CD4-positive, alpha-beta memory T cell (primary cell): ENCODE measurements at regions of chr14 and their contacts with region 1.

Region 1: DNA sequence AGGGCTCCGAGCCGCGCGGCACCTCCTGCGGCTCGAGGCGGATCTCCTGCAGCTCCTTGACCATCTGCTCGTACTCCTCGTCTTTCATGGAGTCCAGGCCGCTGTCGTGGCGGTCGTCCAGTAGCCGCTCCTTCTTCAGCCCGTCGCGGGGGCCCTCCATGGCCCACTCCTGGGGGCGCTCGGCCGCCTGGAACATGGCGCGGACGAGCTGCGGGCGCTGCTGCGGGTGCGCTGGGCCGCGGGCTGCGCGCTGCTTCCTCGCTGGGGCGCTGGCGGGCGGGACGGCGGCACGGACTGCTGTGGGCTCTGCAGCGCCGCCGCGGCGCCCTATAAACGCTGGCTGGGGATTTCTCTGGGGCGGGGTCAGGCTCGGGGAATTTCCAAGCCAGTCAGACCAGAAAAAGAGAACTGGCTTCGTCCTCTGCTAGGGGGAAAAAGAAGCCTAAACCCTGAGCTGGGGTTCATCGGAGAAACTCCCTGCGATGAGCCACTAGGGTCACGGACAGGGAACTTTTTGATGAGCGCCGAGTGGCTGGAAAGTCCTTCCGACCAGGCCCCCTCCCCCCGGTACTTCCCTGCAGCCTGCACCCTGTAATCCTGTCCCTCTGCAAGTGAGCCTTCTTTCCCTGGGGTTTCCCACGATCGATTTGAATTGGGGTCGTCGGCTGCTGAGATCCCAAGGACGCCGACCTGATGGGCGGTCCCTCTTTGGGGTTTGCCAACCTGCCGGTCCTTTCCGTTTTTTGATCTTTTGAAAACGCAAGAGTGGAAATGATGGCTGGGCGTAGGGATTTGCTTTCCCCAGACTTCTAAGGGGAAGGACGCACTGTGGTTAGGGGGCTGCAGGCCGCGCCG is at the start of gene NFKBIA:
- DNase-seq: peak; percentile 94 to 96 (median 95)
- H3K4me3 ChIP-seq: peak within 1 kb of the TSS; percentile 88 to 98
- H3K4me3 Mint-ChIP-seq: peak within 1 kb of the TSS; percentile 93 to 97 (median 95)
- H3K27ac ChIP-seq: peak within 1 kb of the TSS; percentile 100
- H3K27ac Mint-ChIP-seq: peak within 1 kb of the TSS; percentile 99 to 100 (median 99)
- H3K4me1 ChIP-seq: peaks cover 60% of the 10 kb centered on the region
- H3K4me1 Mint-ChIP-seq: peaks cover 34 to 71% (median 49%) of the 10 kb centered on the region in 4 donors
- H3K27me3 ChIP-seq: no peaks in the 10 kb centered on the region
- H3K27me3 Mint-ChIP-seq: peaks cover 0 to 2% of the 10 kb centered on the region in 2 donors
- total RNA-seq, gene NFKBIA: 119 to 120 TPM

Region 2: DNA sequence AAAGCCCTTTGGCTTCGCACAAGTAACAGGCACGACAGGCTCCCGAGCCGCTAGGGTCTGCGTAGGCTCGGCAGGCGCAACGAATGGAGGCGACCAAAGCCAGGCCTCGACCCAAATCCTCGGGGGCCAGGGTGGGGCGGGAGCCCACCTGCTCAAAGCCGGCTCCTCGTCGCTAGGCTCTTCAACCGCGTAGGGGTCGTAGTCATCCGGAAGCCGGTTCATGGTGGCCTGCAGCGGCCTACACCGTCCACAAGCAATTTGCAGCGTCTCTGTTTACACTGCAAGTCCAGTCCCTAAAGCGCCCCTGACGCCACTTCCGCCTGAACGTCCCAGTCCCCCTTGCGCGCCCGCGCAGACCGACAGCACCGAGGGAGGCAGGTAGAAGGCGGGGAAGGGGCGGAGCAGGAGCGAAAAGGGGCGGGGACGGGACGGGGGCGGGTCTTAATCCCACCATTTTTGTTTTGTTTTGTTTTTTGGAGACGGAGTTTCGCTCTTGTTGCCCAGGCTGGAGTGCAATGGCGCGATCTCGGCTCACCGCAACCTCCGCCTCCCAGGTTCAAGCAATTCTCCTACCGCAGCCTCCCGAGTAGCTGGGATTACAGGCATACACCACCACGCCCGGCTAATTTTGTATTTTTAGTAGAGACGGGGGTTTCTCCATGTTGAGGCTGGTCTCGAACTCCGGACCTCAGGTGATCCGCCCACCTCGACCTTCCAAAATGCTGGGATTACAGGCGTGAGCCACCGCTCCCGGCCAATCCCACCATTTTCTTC is 865.1 kb before region 1 on chr14 and contains the start of gene EAPP:
- CTCF ChIA-PET with region 1: no interaction called
- POLR2A ChIA-PET with region 1: interaction called, 6 read pairs
- intact Hi-C with region 1: loop called (anchors 5 kb)
- DNase-seq: peak; percentile 91 to 97 (median 93)
- H3K4me3 ChIP-seq: peak within 1 kb of the TSS; percentile 66 to 94
- H3K4me3 Mint-ChIP-seq: peak within 1 kb of the TSS; percentile 97 to 100 (median 99)
- H3K27ac ChIP-seq: peak within 1 kb of the TSS; percentile 100
- H3K27ac Mint-ChIP-seq: peak within 1 kb of the TSS; percentile 97 to 100 (median 99)
- H3K4me1 ChIP-seq: peaks cover 31% of the 10 kb centered on the region
- H3K4me1 Mint-ChIP-seq: peaks cover 19 to 45% (median 31%) of the 10 kb centered on the region in 4 donors
- H3K27me3 ChIP-seq: no peaks in the 10 kb centered on the region
- H3K27me3 Mint-ChIP-seq: no peaks in the 10 kb centered on the region
- total RNA-seq, gene EAPP: 58.2 to 66.4 TPM

Region 3: GRCh38 chr14:35046048-35046741 is 358.5 kb before region 1 on chr14 and contains the start of gene FAM177A1:
- CTCF ChIA-PET with region 1: interaction called, 7 read pairs
- POLR2A ChIA-PET with region 1: interaction called, 58 read pairs
- intact Hi-C with region 1: loop called (anchors 1 kb)
- DNase-seq: peak; percentile 98 to 100 (median 99)
- H3K4me3 ChIP-seq: peak within 1 kb of the TSS; percentile 76 to 92
- H3K4me3 Mint-ChIP-seq: peak within 1 kb of the TSS; percentile 87 to 100 (median 96)
- H3K27ac ChIP-seq: peak within 1 kb of the TSS; percentile 98
- H3K27ac Mint-ChIP-seq: peak within 1 kb of the TSS; percentile 95 to 100 (median 99)
- H3K4me1 ChIP-seq: peaks cover 24% of the 10 kb centered on the region
- H3K4me1 Mint-ChIP-seq: peaks cover 19 to 38% (median 30%) of the 10 kb centered on the region in 4 donors
- H3K27me3 ChIP-seq: no peaks in the 10 kb centered on the region
- H3K27me3 Mint-ChIP-seq: no peaks in the 10 kb centered on the region
- total RNA-seq, gene FAM177A1: 35.2 to 41.5 TPM

Region 4: GRCh38 chr14:35201066-35201465 is 203.6 kb before region 1 on chr14:
- CTCF ChIA-PET with region 1: interaction called, 4 read pairs
- POLR2A ChIA-PET with region 1: interaction called, 28 read pairs
- intact Hi-C with region 1: no loop called
- DNase-seq: peak in 4 of 5 donors; percentile 22 to 40 (median 28)
- H3K4me3 ChIP-seq: no peak overlapping the region
- H3K4me3 Mint-ChIP-seq: peak overlapping the region in 6 of 8 donors; percentile 29 to 78 (median 61)
- H3K27ac ChIP-seq: peak overlapping the region; percentile 15
- H3K27ac Mint-ChIP-seq: peak overlapping the region; percentile 44 to 89 (median 70)
- H3K4me1 ChIP-seq: peaks cover 63% of the 10 kb centered on the region
- H3K4me1 Mint-ChIP-seq: peaks cover 28 to 57% (median 45%) of the 10 kb centered on the region in 4 donors
- H3K27me3 ChIP-seq: no peaks in the 10 kb centered on the region
- H3K27me3 Mint-ChIP-seq: no peaks in the 10 kb centered on the region

Region 5: DNA sequence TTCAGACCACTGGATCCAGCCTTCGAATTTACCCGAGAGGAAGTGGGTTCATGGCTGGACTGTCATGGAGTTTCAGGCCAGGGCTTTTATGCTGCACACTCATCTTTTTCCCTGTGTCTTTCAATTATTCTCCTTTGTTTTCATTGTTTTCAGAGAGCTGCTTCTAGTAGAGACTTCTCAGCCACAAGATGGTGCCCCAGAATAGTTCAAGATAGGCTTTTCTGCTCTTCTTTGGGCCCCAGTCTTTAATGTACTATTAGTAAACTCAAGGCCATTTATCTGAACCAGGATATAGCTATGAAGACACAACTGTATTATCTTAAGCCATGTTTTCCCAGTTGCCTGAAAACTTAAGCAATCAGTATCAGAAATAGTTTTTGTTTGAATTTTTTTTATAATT is 142.9 kb before region 1 on chr14:
- CTCF ChIA-PET with region 1: interaction called, 28 read pairs
- POLR2A ChIA-PET with region 1: interaction called, 5 read pairs
- intact Hi-C with region 1: no loop called
- DNase-seq: no peak
- H3K4me3 ChIP-seq: no peak overlapping the region
- H3K4me3 Mint-ChIP-seq: no peak overlapping the region
- H3K27ac ChIP-seq: no peak overlapping the region
- H3K27ac Mint-ChIP-seq: peak overlapping the region in 2 of 7 donors; percentile 29 to 76
- H3K4me1 ChIP-seq: no peaks in the 10 kb centered on the region
- H3K4me1 Mint-ChIP-seq: peaks cover 0 to 7% (median under 1%) of the 10 kb centered on the region in 4 donors
- H3K27me3 ChIP-seq: no peaks in the 10 kb centered on the region
- H3K27me3 Mint-ChIP-seq: no peaks in the 10 kb centered on the region

Region 6: GRCh38 chr14:35301735-35302528 is 102.7 kb before region 1 on chr14:
- CTCF ChIA-PET with region 1: interaction called, 3 read pairs
- POLR2A ChIA-PET with region 1: interaction called, 49 read pairs
- intact Hi-C with region 1: no loop called
- DNase-seq: no peak
- H3K4me3 ChIP-seq: no peak overlapping the region
- H3K4me3 Mint-ChIP-seq: peak overlapping the region in 7 of 8 donors; percentile 25 to 73 (median 59)
- H3K27ac ChIP-seq: peak overlapping the region; percentile 30
- H3K27ac Mint-ChIP-seq: peak overlapping the region in 6 of 7 donors; percentile 43 to 89 (median 68)
- H3K4me1 ChIP-seq: peaks cover 71% of the 10 kb centered on the region
- H3K4me1 Mint-ChIP-seq: peaks cover 42 to 65% (median 50%) of the 10 kb centered on the region in 4 donors
- H3K27me3 ChIP-seq: no peaks in the 10 kb centered on the region
- H3K27me3 Mint-ChIP-seq: no peaks in the 10 kb centered on the region

Region 7: DNA sequence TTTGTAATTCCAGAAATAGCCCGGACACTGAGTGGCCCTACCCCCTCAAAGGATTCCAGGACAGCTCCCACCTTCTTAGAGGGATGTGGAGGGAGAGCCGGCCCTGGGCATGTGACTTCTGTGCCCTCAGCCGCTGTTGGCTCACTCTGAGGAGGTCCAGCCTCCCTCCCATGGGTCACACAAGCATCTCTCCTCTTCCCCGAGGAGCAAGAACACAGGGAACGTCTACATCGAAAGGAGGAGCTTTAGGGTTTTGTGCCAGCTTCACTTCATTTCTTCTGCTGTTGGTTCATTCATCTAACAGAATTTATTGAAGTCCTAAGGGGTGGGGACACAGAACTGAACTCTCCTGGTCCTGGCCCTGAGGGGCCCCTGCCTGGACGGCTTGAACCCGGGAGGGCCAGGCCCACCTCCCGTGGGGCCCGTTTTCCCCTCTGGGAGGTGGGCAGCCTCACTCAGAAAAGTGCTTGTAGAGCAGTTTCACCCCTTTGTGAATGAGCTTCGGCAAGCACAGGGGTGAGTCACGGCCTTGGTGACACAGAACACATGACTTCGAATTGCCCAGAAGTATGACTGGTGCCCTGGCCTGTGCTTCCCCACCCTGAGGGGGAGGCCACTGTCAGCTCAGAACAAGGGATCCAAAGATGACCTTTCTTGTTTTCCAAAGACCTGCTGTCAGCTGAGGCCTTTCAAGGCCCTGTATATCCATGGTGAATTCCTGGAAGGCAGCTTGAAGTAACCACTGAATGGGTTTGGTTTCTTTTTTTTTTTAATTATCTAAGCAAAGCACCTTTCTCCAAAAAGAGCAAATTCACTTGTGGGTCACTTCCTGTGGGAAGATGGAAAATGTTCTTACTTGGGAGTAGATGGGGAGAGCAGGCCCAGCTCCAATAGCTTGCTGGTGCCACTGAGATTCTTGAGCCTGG is 39.3 kb before region 1 on chr14:
- CTCF ChIA-PET with region 1: no interaction called
- POLR2A ChIA-PET with region 1: interaction called, 14 read pairs
- intact Hi-C with region 1: loop called (anchors 5 kb)
- DNase-seq: no peak
- H3K4me3 ChIP-seq: no peak overlapping the region
- H3K4me3 Mint-ChIP-seq: peak overlapping the region in 1 of 8 donors; percentile 5
- H3K27ac ChIP-seq: no peak overlapping the region
- H3K27ac Mint-ChIP-seq: peak overlapping the region in 3 of 7 donors; percentile 17 to 80 (median 70)
- H3K4me1 ChIP-seq: no peaks in the 10 kb centered on the region
- H3K4me1 Mint-ChIP-seq: peaks cover 0 to 2% (median 0%) of the 10 kb centered on the region in 4 donors
- H3K27me3 ChIP-seq: no peaks in the 10 kb centered on the region
- H3K27me3 Mint-ChIP-seq: no peaks in the 10 kb centered on the region